ENCODE measurements at regions of chr11 and their contacts with region 1.

Region 1: GRCh38 chr11:88886796-88887195 is 179.0 kb downstream of the GRM5 start:
- DNase-seq: peak; percentile 40
- ATAC-seq: peak; percentile 95
- H3K4me3 ChIP-seq: no peak overlapping the region
- H3K27ac ChIP-seq: no peak overlapping the region
- H3K4me1 ChIP-seq: no peaks in the 10 kb centered on the region
- H3K27me3 ChIP-seq: no peaks in the 10 kb centered on the region
- CTCF ChIP-seq: peak; percentile 81
- EP300 ChIP-seq: no peak
- POLR2A ChIP-seq: no peak
- RAD21 ChIP-seq: peak; percentile 41

Region 2: DNA sequence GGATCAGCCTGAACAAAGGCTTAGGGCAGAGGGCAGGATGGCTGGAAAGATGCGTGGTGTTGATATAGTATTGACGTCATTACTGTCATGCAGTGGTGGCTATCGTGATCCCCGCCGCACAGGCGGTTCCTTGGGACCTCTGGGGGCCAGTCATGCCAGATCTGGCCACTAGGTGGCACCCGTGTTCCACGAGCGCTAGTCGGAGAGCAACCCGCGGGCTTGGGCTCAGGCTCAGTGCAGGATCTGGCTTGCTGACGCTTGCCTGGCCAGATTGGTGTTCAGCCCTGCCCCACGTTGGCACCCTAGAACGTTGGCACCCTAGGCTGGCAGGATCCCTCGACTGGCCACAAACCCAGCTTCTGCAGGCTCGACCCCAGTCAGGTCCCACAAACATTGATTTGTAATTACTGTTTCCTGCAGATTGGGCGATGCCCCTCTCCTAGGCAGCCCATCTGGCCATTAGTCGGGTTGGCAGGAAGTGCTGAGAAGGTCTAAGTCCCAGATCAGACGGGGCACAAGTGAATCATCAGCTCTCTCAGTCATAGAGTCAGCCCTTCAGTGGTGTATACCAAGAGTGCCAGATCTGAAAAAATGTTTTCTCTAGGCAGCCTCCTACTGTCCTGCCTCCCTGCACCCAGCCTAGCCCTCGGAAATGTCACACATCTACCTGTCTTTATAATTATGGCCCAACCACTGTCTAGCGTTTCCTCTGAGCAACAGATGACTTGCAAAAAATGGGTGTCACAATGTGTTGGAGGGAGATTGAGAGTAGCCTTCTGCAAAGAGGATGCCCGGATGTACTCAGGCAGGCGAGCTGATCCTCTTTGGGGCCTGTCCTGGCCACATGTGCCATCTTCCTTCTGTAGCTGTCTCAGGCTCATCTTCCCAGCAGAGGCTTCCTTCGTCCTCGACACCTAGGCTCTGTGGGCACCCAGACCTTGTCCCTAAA is 1533.8 kb before region 1 on chr11:
- CTCF ChIA-PET with region 1: no interaction called
- POLR2A ChIA-PET with region 1: no interaction called
- in situ Hi-C with region 1: no loop called
- intact Hi-C with region 1: loop called (anchors 10 kb)
- DNase-seq: peak; percentile 51
- ATAC-seq: peak; percentile 98
- H3K4me3 ChIP-seq: no peak overlapping the region; a peak in 1 of 6 replicates
- H3K27ac ChIP-seq: no peak overlapping the region
- H3K4me1 ChIP-seq: no peaks in the 10 kb centered on the region
- H3K27me3 ChIP-seq: no peaks in the 10 kb centered on the region
- CTCF ChIP-seq: peak; percentile 98
- EP300 ChIP-seq: no peak
- POLR2A ChIP-seq: no peak
- RAD21 ChIP-seq: peak; percentile 93

Region 3: GRCh38 chr11:88103337-88104206 is 783.2 kb before region 1 on chr11:
- CTCF ChIA-PET with region 1: no interaction called
- POLR2A ChIA-PET with region 1: no interaction called
- in situ Hi-C with region 1: no loop called
- intact Hi-C with region 1: loop called (anchors 5 kb)
- DNase-seq: peak; percentile 52
- ATAC-seq: peak; percentile 90
- H3K4me3 ChIP-seq: no peak overlapping the region
- H3K27ac ChIP-seq: no peak overlapping the region
- H3K4me1 ChIP-seq: 0 out of 2 replicates have a peak, but pooled peaks cover 8% of the 10 kb centered on the region
- H3K27me3 ChIP-seq: no peaks in the 10 kb centered on the region
- CTCF ChIP-seq: peak; percentile 73
- EP300 ChIP-seq: no peak
- POLR2A ChIP-seq: no peak
- RAD21 ChIP-seq: no peak

Region 4: GRCh38 chr11:88231894-88232482 is 654.8 kb before region 1 on chr11:
- CTCF ChIA-PET with region 1: no interaction called
- POLR2A ChIA-PET with region 1: no interaction called
- in situ Hi-C with region 1: no loop called
- intact Hi-C with region 1: loop called (anchors 5 kb)
- DNase-seq: peak; percentile 13
- ATAC-seq: peak; percentile 94
- H3K4me3 ChIP-seq: no peak overlapping the region
- H3K27ac ChIP-seq: no peak overlapping the region
- H3K4me1 ChIP-seq: no peaks in the 10 kb centered on the region
- H3K27me3 ChIP-seq: no peaks in the 10 kb centered on the region
- CTCF ChIP-seq: peak; percentile 55
- EP300 ChIP-seq: no peak
- POLR2A ChIP-seq: no peak
- RAD21 ChIP-seq: no peak

Region 5: DNA sequence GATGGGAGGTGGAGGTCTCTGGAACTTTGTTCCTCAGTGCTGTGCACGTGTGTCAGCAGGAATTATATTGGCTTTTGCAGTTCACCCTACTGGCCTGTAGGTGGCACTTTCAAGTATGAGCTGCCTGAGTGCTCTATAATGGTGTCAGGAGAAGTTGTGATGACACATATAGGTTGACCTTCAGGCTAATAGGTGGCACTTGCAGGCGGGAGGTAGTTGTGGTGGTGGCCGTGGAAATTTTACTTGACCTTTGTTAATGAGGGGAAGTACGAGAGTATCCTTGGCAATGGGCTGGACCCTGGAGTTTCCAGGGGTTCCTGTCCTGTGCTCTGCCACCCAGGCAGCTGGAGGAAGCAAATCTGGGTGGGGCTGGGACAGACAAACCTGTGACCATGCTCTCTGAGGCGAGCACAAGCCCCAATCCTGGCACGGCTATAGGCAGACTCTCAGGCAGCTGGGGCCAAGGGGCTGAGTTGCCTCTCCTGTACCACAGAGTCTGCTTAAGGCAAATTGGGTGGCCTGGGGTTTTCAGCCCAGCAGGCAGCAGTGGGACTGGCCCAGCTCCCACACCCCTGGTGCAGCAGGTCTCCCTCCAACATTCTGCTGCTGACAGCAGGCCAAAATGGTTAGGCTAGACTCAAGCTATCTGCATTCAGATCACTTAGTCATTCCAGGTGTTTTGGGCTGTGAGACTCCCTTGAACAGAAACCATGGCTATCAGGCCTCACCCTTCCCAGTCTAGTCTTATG is 401.7 kb before region 1 on chr11:
- CTCF ChIA-PET with region 1: no interaction called
- POLR2A ChIA-PET with region 1: no interaction called
- in situ Hi-C with region 1: no loop called
- intact Hi-C with region 1: loop called (anchors 10 kb)
- DNase-seq: peak; percentile 50
- ATAC-seq: peak; percentile 99
- H3K4me3 ChIP-seq: no peak overlapping the region
- H3K27ac ChIP-seq: no peak overlapping the region
- H3K4me1 ChIP-seq: no peaks in the 10 kb centered on the region
- H3K27me3 ChIP-seq: no peaks in the 10 kb centered on the region
- CTCF ChIP-seq: peak; percentile 69
- EP300 ChIP-seq: no peak
- POLR2A ChIP-seq: no peak
- RAD21 ChIP-seq: 0 out of 2 replicates have a peak, but pooled peaks have one; percentile 18